Activated CD4-positive, alpha-beta T cell treated with anti-CD3 and anti-CD28 coated beads, Interleukin-2, amount 10 ng/mL, durations not matched to agents 7 days and 5 days (primary cell): ENCODE measurements at regions of chr22 and their contacts with region 1.

Region 1: DNA sequence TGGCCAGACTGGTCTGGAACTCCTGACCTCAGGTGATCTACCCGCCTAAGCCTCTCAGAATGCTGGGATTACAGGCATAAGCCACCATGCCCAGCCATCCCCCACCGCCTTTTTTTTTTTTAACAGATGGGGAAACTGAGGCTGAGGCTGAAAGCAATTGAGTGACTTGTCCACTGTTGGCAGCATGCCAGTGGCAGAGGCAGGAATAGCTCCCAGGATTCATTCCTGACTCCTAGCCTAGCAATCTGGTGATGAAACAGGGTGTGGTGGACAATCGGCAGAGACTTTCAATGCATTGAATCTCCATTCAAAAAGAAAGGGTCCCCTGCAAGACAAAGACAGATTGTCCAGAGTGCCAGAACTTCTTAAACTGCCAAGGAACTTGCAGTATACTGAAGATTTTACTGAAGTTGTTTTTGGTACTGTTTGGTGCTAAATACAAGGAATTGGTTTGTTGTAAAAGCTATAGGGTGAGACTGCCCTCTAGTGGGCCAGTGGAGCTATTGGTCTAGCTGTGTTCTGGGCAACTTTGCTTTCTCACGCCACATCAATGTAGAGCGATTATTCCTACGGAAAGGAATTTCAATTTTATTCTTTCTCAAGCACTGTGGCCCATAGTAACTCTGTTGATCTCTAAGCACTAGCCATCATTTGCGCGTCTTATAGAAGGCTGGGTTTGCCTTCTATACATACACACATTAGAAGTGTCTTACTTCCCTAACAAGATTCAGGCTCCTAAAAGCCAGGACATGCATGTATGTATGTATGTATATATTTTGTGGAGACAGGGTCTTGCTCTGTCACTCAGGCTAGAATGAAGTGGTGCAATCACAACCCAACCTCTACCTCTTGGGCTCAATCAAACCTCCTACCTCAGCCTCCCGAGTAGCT is 21.0 kb downstream of the C22orf31 start:
- DNase-seq: peak; percentile 81
- H3K4me3 Mint-ChIP-seq: no peak overlapping the region
- H3K27ac Mint-ChIP-seq: no peak overlapping the region
- H3K4me1 Mint-ChIP-seq: no peaks in the 10 kb centered on the region
- H3K27me3 Mint-ChIP-seq: peaks cover 9% of the 10 kb centered on the region

Region 2: GRCh38 chr22:28600546-28601143 is 440.0 kb before region 1 on chr22:
- CTCF ChIA-PET with region 1: interaction called, 10 read pairs
- POLR2A ChIA-PET with region 1: interaction called, 4 read pairs
- DNase-seq: peak; percentile 56
- H3K4me3 Mint-ChIP-seq: no peak overlapping the region
- H3K27ac Mint-ChIP-seq: no peak overlapping the region
- H3K4me1 Mint-ChIP-seq: no peaks in the 10 kb centered on the region
- H3K27me3 Mint-ChIP-seq: peaks cover 33% of the 10 kb centered on the region

Region 3: GRCh38 chr22:29004647-29005371 is 35.8 kb before region 1 on chr22:
- CTCF ChIA-PET with region 1: no interaction called
- POLR2A ChIA-PET with region 1: no interaction called
- DNase-seq: no peak
- H3K4me3 Mint-ChIP-seq: no peak overlapping the region
- H3K27ac Mint-ChIP-seq: no peak overlapping the region
- H3K4me1 Mint-ChIP-seq: no peaks in the 10 kb centered on the region
- H3K27me3 Mint-ChIP-seq: peaks cover 32% of the 10 kb centered on the region

Region 4: GRCh38 chr22:29055192-29055830 is 14.7 kb after region 1 on chr22:
- CTCF ChIA-PET with region 1: interaction called, 11 read pairs
- POLR2A ChIA-PET with region 1: no interaction called
- DNase-seq: no peak
- H3K4me3 Mint-ChIP-seq: no peak overlapping the region
- H3K27ac Mint-ChIP-seq: no peak overlapping the region
- H3K4me1 Mint-ChIP-seq: no peaks in the 10 kb centered on the region
- H3K27me3 Mint-ChIP-seq: peaks cover 7% of the 10 kb centered on the region